PC-9 (cell line): ENCODE measurements at regions of chr12 and their contacts with region 1.

Region 1: GRCh38 chr12:6323340-6323994 is 13.0 kb downstream of the PLEKHG6 start:
- DNase-seq: peak; percentile 75 to 88
- H3K4me3 ChIP-seq: no peak overlapping the region
- H3K27ac ChIP-seq: peak overlapping the region; percentile 60
- H3K4me1 ChIP-seq: peaks cover 39% of the 10 kb centered on the region
- H3K27me3 ChIP-seq: no peaks in the 10 kb centered on the region
- CTCF ChIP-seq: peak; percentile 79

Region 2: GRCh38 chr12:6074979-6075585 is 248.4 kb before region 1 on chr12:
- CTCF ChIA-PET with region 1: no interaction called
- POLR2A ChIA-PET with region 1: no interaction called
- intact Hi-C with region 1: no loop called
- DNase-seq: no peak
- H3K4me3 ChIP-seq: no peak overlapping the region
- H3K27ac ChIP-seq: no peak overlapping the region
- H3K4me1 ChIP-seq: peaks cover 31% of the 10 kb centered on the region
- H3K27me3 ChIP-seq: no peaks in the 10 kb centered on the region
- CTCF ChIP-seq: no peak

Region 3: GRCh38 chr12:6124411-6125309 is 198.8 kb before region 1 on chr12 and contains the start of gene VWF:
- CTCF ChIA-PET with region 1: interaction called, 10 read pairs
- POLR2A ChIA-PET with region 1: no interaction called
- intact Hi-C with region 1: no loop called
- DNase-seq: no peak
- H3K4me3 ChIP-seq: no peak within 1 kb of the TSS
- H3K27ac ChIP-seq: no peak within 1 kb of the TSS
- H3K4me1 ChIP-seq: no peaks in the 10 kb centered on the region
- H3K27me3 ChIP-seq: no peaks in the 10 kb centered on the region
- CTCF ChIP-seq: no peak
- total RNA-seq, gene VWF: 0.48 and 0.88 TPM in 2 replicates

Region 4: DNA sequence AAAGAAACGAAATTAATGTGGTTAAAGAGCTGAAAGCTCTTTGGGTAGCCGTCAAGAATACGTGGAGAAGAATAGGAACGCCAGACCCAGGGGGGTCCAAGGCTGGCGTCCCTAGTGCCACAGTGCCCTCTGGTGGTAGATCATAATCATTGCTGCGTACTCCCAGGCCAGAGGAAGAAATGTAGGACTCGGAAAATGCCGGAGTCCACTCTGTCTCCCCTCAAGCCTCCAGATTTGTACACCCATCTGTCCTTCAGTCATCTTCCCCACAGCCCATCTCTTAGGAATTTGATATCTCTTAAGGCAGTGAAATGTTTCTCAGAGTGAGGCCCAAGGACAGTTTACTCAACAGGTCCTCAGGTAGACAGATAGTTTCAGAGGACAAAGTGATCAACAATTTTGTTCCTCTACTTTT is 38.4 kb before region 1 on chr12:
- CTCF ChIA-PET with region 1: interaction called, 3 read pairs
- POLR2A ChIA-PET with region 1: no interaction called
- intact Hi-C with region 1: loop called (anchors 2 kb)
- DNase-seq: peak; percentile 48 to 79
- H3K4me3 ChIP-seq: no peak overlapping the region
- H3K27ac ChIP-seq: no peak overlapping the region
- H3K4me1 ChIP-seq: peaks cover 40% of the 10 kb centered on the region
- H3K27me3 ChIP-seq: no peaks in the 10 kb centered on the region
- CTCF ChIP-seq: peak; percentile 99

Region 5: DNA sequence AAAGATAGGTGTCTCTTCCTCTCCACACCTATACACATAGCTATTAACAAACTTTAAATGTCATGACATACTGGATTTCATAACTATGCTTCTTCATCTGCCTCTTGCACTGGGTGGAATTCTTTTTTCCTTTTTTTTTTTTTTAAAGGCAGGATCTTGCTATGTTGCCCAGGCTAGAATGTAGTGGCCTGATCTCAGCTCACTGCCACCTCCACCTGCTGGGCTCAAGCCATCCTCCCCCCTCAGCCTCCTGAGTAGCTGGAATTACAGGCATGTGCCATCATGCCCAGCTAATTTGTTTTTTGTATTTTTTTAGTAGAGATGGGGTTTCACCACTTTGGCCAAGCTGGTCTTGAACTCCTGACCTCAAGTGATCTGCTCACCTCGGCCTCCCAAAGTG is 164.8 kb after region 1 on chr12:
- CTCF ChIA-PET with region 1: no interaction called
- POLR2A ChIA-PET with region 1: interaction called, 13 read pairs
- intact Hi-C with region 1: no loop called
- DNase-seq: no peak
- H3K4me3 ChIP-seq: no peak overlapping the region
- H3K27ac ChIP-seq: no peak overlapping the region
- H3K4me1 ChIP-seq: peaks cover 9% of the 10 kb centered on the region; the same call in 1 of the 2 replicates
- H3K27me3 ChIP-seq: no peaks in the 10 kb centered on the region
- CTCF ChIP-seq: no peak

Region 6: DNA sequence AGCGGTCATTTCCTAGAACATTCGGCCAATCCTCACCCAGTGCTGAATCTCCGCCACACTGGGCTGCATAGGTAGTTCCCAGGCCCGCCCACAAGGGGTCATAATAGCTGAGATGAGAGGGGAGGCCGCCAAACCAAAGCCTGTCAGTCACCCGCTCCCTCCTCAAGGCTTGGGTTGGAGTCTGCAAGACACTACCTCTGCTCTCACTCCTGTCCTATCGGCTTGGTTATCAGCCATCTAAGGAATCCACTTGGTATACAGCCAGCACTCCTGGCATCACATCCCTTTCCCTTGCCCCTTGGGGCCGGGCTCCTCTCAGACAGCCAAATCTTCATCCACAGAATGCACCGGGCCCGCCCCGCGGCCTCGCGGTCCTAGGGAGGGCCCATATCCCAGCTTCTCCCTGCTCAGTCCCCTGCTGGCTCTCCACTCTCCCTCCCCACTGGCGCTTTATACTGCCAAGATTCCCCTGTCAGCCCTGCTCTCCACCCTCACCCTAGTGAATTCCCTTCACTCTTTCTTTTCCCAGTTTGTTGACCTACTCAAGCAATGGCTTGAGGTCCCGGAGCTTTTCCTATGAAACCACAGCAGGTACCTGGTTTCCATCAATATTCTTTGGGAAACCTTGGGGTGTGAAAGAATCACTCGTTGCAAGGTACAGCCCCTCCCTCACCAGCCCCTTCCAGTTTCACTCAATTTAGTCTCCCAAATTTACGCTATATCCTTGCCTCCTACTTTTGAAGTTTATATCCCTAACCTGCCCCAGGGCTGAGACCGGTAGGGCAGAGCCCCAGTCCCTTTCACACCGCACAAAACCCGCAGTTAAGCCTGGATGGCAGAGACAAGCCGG is 230.9 kb after region 1 on chr12:
- CTCF ChIA-PET with region 1: interaction called, 13 read pairs
- POLR2A ChIA-PET with region 1: no interaction called
- intact Hi-C with region 1: no loop called
- DNase-seq: peak in 1 of 2 experiments; percentile 65
- H3K4me3 ChIP-seq: no peak overlapping the region
- H3K27ac ChIP-seq: no peak overlapping the region
- H3K4me1 ChIP-seq: no peaks in the 10 kb centered on the region
- H3K27me3 ChIP-seq: no peaks in the 10 kb centered on the region
- CTCF ChIP-seq: peak; percentile 62